Activated CD4-positive, alpha-beta T cell treated with anti-CD3 and anti-CD28 coated beads, Interleukin-2, amount 10 ng/mL, durations not matched to agents 24 days and 14 days (primary cell): ENCODE measurements at regions of chr19 and their contacts with region 1.

Region 1: GRCh38 chr19:2236314-2237050 is at the starts of genes PLEKHJ1 and SF3A2:
- DNase-seq: peak; percentile 100
- H3K4me3 Mint-ChIP-seq: peak within 1 kb of the TSS; percentile 100
- H3K27ac Mint-ChIP-seq: peak within 1 kb of the TSS; percentile 100
- H3K4me1 Mint-ChIP-seq: peaks cover 55% of the 10 kb centered on the region
- H3K27me3 Mint-ChIP-seq: peaks cover 2% of the 10 kb centered on the region
- total RNA-seq, gene PLEKHJ1: 70.5 and 71.6 TPM in 2 replicates
- total RNA-seq, gene SF3A2: 159 and 171 TPM in 2 replicates

Region 2: DNA sequence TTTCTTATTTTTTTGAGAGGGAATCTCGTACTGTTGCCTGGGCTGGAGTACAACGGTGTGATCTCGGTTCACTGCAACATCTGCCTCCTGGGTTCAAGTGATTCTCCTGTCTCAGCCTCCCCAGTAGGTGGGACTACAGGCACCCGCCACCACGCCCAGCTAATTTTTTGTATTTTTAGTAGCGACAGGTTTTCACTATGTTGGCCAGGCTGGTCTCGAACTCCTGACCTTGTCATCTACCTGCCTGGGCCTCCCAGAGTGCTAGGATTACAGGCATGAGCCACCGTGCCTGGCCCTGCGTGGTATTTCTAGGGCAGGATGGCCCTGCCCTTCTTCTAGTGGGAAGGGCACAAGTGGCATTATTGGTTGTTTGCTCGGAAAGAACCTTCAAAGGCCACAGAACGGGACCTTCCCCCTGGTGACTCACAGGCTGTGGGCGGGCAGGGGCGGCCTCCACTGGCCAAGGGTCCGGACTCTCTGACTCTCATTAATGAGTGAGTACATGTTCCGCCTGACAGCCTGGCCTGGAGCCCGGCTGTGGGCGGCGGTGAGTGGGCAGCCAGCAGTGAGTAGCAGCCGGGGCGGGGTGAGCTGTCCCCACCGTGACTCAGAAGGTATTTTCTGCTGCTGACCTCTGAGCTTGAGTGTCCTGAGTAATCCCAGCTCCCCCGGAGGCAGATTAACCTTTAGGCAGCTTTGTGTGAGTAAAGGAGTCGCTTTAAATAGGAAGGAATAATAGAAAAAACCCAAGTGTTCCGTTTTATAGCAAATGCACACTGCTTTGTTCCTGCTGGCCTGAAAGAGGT is 67.7 kb before region 1 on chr19:
- intact Hi-C with region 1: loop called (anchors 5 kb)
- DNase-seq: peak; percentile 81
- H3K4me3 Mint-ChIP-seq: peak overlapping the region; percentile 77
- H3K27ac Mint-ChIP-seq: peak overlapping the region; percentile 94
- H3K4me1 Mint-ChIP-seq: peaks cover 49% of the 10 kb centered on the region
- H3K27me3 Mint-ChIP-seq: peaks cover 2% of the 10 kb centered on the region

Region 3: GRCh38 chr19:2269244-2269947 is 32.9 kb after region 1 on chr19:
- intact Hi-C with region 1: loop called (anchors 1 kb)
- DNase-seq: peak; percentile 100
- H3K4me3 Mint-ChIP-seq: peak overlapping the region; percentile 93
- H3K27ac Mint-ChIP-seq: peak overlapping the region; percentile 91
- H3K4me1 Mint-ChIP-seq: peaks cover 31% of the 10 kb centered on the region
- H3K27me3 Mint-ChIP-seq: no peaks in the 10 kb centered on the region

Region 4: GRCh38 chr19:2282062-2282861 is 45.8 kb after region 1 on chr19 and contains the start of gene PEAK3:
- intact Hi-C with region 1: no loop called
- DNase-seq: peak; percentile 84
- H3K4me3 Mint-ChIP-seq: peak within 1 kb of the TSS; percentile 73
- H3K27ac Mint-ChIP-seq: peak within 1 kb of the TSS; percentile 62
- H3K4me1 Mint-ChIP-seq: peaks cover 9% of the 10 kb centered on the region
- H3K27me3 Mint-ChIP-seq: peaks cover 2% of the 10 kb centered on the region
- total RNA-seq, gene PEAK3: 0.09 TPM in 1 of 2 replicates, not detected in the other

Region 5: GRCh38 chr19:2328401-2329148 is 92.1 kb after region 1 on chr19 and contains the starts of genes LSM7 and SPPL2B:
- intact Hi-C with region 1: loop called (anchors 1 kb)
- DNase-seq: peak; percentile 98
- H3K4me3 Mint-ChIP-seq: peak within 1 kb of the TSS; percentile 95
- H3K27ac Mint-ChIP-seq: peak within 1 kb of the TSS; percentile 97
- H3K4me1 Mint-ChIP-seq: peaks cover 51% of the 10 kb centered on the region
- H3K27me3 Mint-ChIP-seq: no peaks in the 10 kb centered on the region
- total RNA-seq, gene LSM7: 190 and 192 TPM in 2 replicates
- total RNA-seq, gene SPPL2B: 69.7 and 69.8 TPM in 2 replicates

Region 6: GRCh38 chr19:2391118-2391725 is 154.7 kb after region 1 on chr19:
- intact Hi-C with region 1: loop called (anchors 1 kb)
- DNase-seq: peak; percentile 84
- H3K4me3 Mint-ChIP-seq: no peak overlapping the region
- H3K27ac Mint-ChIP-seq: no peak overlapping the region
- H3K4me1 Mint-ChIP-seq: peaks cover 7% of the 10 kb centered on the region
- H3K27me3 Mint-ChIP-seq: peaks cover 6% of the 10 kb centered on the region